Gastrocnemius medialis (tissue), 4 donors: ENCODE measurements at regions of chr11 and their contacts with region 1.

Region 1: DNA sequence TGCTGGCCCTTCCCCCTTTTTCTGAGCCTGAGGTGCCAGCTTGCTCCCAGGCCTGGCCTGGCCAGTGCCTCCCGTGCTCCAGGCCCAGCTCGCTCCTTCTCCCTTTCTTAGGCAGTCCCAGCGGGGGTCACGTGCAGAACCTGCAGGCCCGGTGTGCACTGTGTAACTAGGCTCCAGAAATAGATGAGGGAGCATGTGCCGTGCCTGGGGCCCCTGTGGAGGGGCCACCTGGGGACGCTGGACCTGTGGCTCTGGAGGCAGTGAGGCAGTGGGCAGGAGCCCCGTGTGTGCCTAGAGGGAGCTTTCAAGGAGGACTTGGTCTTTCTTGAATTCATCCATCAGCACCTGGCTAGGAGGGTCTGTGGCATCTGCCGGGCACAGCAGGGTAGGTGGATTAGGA is 11.5 kb downstream of the PTDSS2 start:
- DNase-seq: no peak
- ATAC-seq: no peak
- H3K4me3 ChIP-seq: no peak overlapping the region
- H3K27ac ChIP-seq: no peak overlapping the region
- H3K4me1 ChIP-seq: no peaks in the 10 kb centered on the region
- H3K27me3 ChIP-seq: no peaks in the 10 kb centered on the region
- CTCF ChIP-seq: no peak
- POLR2A ChIP-seq: no peak

Region 2: GRCh38 chr11:257766-258493 is 203.7 kb before region 1 on chr11:
- in situ Hi-C with region 1: no loop called
- intact Hi-C with region 1: no loop called
- DNase-seq: no peak
- ATAC-seq: no peak
- H3K4me3 ChIP-seq: no peak overlapping the region
- H3K27ac ChIP-seq: no peak overlapping the region
- H3K4me1 ChIP-seq: no peaks in the 10 kb centered on the region
- H3K27me3 ChIP-seq: no peaks in the 10 kb centered on the region
- CTCF ChIP-seq: no peak
- POLR2A ChIP-seq: no peak

Region 3: GRCh38 chr11:390175-390574 is 71.5 kb before region 1 on chr11:
- in situ Hi-C with region 1: no loop called
- intact Hi-C with region 1: no loop called
- DNase-seq: no peak
- ATAC-seq: no peak
- H3K4me3 ChIP-seq: no peak overlapping the region
- H3K27ac ChIP-seq: no peak overlapping the region
- H3K4me1 ChIP-seq: no peaks in the 10 kb centered on the region
- H3K27me3 ChIP-seq: peaks cover 0 to 17% (median 7%) of the 10 kb centered on the region in 3 donors
- CTCF ChIP-seq: no peak
- POLR2A ChIP-seq: no peak

Region 4: DNA sequence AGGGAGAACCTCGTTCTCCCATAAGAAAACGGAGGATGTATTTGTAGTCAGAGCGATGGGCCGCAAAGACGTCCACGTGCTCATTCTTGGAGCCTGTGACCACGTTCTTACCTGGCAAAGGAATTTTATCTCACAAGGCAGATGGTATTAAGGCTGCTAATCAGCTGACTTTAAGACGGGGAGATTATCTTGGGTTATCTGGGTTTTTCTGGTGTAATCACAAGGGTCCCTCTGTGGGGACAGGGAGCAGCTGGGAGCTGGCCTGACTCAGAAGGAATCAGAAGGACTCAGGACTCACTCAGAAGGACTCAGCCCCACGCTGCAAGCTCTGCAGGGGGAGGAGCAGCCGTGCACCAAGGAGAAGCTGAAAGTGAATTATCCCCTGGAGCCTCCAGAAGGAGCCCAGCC is 39.4 kb before region 1 on chr11:
- in situ Hi-C with region 1: no loop called
- intact Hi-C with region 1: loop called (anchors 2 kb)
- DNase-seq: no peak
- ATAC-seq: no peak
- H3K4me3 ChIP-seq: no peak overlapping the region
- H3K27ac ChIP-seq: no peak overlapping the region
- H3K4me1 ChIP-seq: no peaks in the 10 kb centered on the region
- H3K27me3 ChIP-seq: peaks cover 38 to 62% (median 49%) of the 10 kb centered on the region in 3 donors
- CTCF ChIP-seq: no peak
- POLR2A ChIP-seq: no peak